B cell (primary cell): ENCODE measurements at regions of chr11 and their contacts with region 1.

Region 1: GRCh38 chr11:45102810-45103621 is 43.4 kb upstream of the PRDM11 start:
- DNase-seq: peak; percentile 82
- ATAC-seq: peak; percentile 95
- H3K4me3 ChIP-seq: peak overlapping the region in 1 of 5 experiments; percentile 18
- H3K4me3 Mint-ChIP-seq: peak overlapping the region; percentile 83
- H3K27ac ChIP-seq: no peak overlapping the region
- H3K27ac Mint-ChIP-seq: peak overlapping the region; percentile 80
- H3K4me1 ChIP-seq: peaks cover 13 to 21% of the 10 kb centered on the region in 2 donors
- H3K4me1 Mint-ChIP-seq: peaks cover 17% of the 10 kb centered on the region
- H3K27me3 ChIP-seq: peaks cover 0 to 8% (median 3%) of the 10 kb centered on the region in 4 experiments
- H3K27me3 Mint-ChIP-seq: peaks cover 13% of the 10 kb centered on the region
- CTCF ChIP-seq: peak; percentile 98

Region 2: DNA sequence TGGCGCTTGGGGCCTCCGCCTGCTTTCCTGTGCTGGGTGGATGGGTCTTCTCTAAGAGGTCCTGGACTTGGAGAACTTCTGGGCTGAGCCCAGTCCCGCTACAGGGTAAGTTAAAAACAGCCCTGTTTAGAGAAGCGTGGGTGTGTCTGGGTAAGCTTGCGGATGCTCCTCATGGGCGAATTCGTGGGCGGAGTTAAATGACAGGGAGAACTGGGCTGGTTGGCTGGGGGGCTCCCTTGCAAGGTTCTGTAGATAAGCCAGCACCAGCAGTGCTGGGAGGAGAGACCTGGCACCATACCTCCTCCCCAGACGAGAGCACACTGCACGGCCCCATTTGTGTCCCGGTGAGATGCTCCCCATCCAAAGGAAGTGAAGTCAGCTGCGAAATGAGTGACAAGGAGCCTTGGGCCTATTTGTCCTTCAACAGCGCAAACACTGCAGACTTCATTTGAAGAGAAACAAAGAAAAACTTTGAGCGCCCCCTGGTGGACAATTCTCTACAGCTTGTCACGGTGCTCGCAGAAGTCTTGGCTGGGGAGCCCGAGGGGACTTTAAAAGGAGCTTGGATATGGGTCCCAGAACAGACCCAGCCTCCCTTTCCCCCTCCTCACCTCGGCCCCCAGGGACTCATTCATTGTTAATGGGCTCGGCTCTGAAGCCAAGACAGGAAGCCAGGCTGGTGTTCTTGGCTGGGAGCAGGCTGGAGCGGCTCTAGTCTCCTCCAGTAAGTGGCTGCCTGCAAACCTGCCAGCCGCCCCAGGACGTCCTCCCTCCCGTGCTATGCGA is 191.8 kb before region 1 on chr11:
- CTCF ChIA-PET with region 1: interaction called, 36 read pairs
- POLR2A ChIA-PET with region 1: no interaction called
- intact Hi-C with region 1: no loop called
- DNase-seq: peak; percentile 85
- ATAC-seq: peak; percentile 69
- H3K4me3 ChIP-seq: no peak overlapping the region
- H3K4me3 Mint-ChIP-seq: no peak overlapping the region
- H3K27ac ChIP-seq: no peak overlapping the region
- H3K27ac Mint-ChIP-seq: no peak overlapping the region
- H3K4me1 ChIP-seq: peaks cover 23 to 31% of the 10 kb centered on the region in 2 donors
- H3K4me1 Mint-ChIP-seq: peaks cover 24% of the 10 kb centered on the region
- H3K27me3 ChIP-seq: peaks cover 0 to 5% (median 0%) of the 10 kb centered on the region in 4 experiments
- H3K27me3 Mint-ChIP-seq: peaks cover 4% of the 10 kb centered on the region
- CTCF ChIP-seq: peak; percentile 82

Region 3: DNA sequence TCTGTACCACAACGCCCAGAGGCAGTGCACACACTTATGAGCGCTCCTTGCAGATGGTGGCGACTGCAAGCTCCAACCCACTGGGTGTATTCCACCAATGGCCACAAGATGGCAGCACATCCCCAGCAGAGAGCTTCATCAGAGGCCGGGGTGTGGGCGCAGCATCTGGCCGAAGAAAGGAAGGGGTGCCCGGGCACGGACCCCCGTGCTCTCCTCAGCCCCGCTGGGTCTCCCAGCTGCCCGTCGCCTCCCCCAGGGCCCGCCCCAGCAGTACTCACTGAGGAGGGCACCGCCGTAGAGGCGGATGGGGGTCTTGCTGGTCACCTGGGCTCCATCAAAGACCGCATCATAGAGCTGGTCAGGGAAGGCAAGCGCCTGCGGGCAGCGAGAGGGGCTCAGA is 166.5 kb before region 1 on chr11:
- CTCF ChIA-PET with region 1: interaction called, 1,701 read pairs
- POLR2A ChIA-PET with region 1: interaction called, 28 read pairs
- intact Hi-C with region 1: loop called (anchors 1 kb)
- DNase-seq: peak; percentile 88
- ATAC-seq: peak; percentile 94
- H3K4me3 ChIP-seq: no peak overlapping the region
- H3K4me3 Mint-ChIP-seq: no peak overlapping the region
- H3K27ac ChIP-seq: no peak overlapping the region
- H3K27ac Mint-ChIP-seq: no peak overlapping the region
- H3K4me1 ChIP-seq: peaks cover 14 to 35% of the 10 kb centered on the region in 2 donors
- H3K4me1 Mint-ChIP-seq: peaks cover 29% of the 10 kb centered on the region
- H3K27me3 ChIP-seq: no peaks in the 10 kb centered on the region
- H3K27me3 Mint-ChIP-seq: no peaks in the 10 kb centered on the region
- CTCF ChIP-seq: peak; percentile 92

Region 4: DNA sequence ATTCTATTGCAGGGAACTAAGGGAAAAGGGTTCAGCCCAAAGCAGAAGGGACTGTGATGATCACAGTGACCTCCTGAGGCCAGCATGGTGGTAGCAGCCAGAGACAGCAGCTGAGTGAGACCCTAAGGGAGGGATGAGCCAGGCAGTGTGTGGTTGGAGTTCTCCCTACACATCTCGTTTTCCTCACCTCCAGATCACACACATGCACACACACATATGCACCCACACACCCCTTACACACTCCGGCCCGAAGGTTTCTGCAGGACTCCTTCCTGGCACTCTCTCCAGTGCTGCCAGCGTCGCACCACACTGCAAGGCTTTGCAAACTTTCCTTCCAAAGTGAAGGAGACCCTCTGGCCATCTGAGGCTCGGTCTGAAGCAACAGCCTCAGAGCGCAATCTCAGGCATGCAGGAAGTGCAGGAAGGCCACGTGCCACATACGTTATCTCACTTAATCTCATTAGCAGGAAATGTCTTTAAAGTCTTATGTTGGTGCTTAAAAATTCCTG is 125.5 kb before region 1 on chr11:
- CTCF ChIA-PET with region 1: interaction called, 37 read pairs
- POLR2A ChIA-PET with region 1: no interaction called
- intact Hi-C with region 1: no loop called
- DNase-seq: no peak
- ATAC-seq: peak; percentile 35
- H3K4me3 ChIP-seq: no peak overlapping the region
- H3K4me3 Mint-ChIP-seq: peak overlapping the region; percentile 40
- H3K27ac ChIP-seq: no peak overlapping the region
- H3K27ac Mint-ChIP-seq: no peak overlapping the region
- H3K4me1 ChIP-seq: peaks cover 12 to 21% of the 10 kb centered on the region in 2 donors
- H3K4me1 Mint-ChIP-seq: peaks cover 11% of the 10 kb centered on the region
- H3K27me3 ChIP-seq: peaks cover 0 to 13% (median 2%) of the 10 kb centered on the region in 4 experiments
- H3K27me3 Mint-ChIP-seq: no peaks in the 10 kb centered on the region
- CTCF ChIP-seq: no peak

Region 5: DNA sequence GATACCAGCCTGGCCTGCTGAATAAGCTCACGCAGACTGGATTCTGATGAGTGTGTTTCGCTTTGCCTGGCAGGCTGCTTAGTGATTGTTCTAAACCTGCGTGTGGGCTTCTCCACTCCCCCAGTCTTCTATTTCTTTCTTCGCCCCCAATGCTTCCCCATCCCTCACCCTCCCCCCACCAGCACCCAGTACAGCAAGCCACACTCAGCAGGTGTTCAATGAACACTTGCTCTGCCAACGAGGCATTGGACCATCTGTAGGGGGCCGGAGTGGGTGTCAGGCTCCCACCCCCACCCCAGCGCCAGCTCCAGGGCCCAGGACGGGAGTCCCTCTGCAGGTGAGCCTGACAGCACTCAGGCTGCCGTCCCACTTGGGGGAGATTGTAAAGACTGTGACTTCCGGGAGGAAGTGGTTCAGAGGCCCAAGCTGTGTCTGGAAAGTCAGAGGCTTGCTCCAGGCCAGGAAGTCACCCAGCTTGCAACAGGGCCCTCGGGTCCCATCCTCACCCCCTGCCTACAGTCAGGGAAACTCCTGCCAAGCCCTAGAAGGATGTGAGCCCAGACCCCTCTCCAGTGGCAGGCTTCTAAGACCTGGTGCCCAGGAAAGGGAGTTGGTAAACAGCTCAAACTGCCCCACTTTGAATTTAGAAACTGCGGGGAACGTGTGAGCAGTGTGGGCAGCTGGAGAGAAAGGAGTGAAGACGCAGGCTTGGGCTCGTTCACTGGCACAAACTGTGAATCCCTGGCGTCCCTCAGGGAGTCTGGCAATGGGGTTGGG is 22.9 kb before region 1 on chr11:
- CTCF ChIA-PET with region 1: interaction called, 40 read pairs
- POLR2A ChIA-PET with region 1: interaction called, 3 read pairs
- intact Hi-C with region 1: loop called (anchors 1 kb)
- DNase-seq: peak; percentile 78
- ATAC-seq: peak; percentile 59
- H3K4me3 ChIP-seq: peak overlapping the region in 2 of 5 experiments; percentile 5 to 6
- H3K4me3 Mint-ChIP-seq: peak overlapping the region; percentile 71
- H3K27ac ChIP-seq: peak overlapping the region; percentile 65 to 73
- H3K27ac Mint-ChIP-seq: peak overlapping the region; percentile 93
- H3K4me1 ChIP-seq: peaks cover 52 to 65% of the 10 kb centered on the region in 2 donors
- H3K4me1 Mint-ChIP-seq: peaks cover 74% of the 10 kb centered on the region
- H3K27me3 ChIP-seq: no peaks in the 10 kb centered on the region
- H3K27me3 Mint-ChIP-seq: no peaks in the 10 kb centered on the region
- CTCF ChIP-seq: no peak